Psoas muscle (tissue), 8 donors: ENCODE measurements at regions of chr2 and their contacts with region 1.

Region 1: DNA sequence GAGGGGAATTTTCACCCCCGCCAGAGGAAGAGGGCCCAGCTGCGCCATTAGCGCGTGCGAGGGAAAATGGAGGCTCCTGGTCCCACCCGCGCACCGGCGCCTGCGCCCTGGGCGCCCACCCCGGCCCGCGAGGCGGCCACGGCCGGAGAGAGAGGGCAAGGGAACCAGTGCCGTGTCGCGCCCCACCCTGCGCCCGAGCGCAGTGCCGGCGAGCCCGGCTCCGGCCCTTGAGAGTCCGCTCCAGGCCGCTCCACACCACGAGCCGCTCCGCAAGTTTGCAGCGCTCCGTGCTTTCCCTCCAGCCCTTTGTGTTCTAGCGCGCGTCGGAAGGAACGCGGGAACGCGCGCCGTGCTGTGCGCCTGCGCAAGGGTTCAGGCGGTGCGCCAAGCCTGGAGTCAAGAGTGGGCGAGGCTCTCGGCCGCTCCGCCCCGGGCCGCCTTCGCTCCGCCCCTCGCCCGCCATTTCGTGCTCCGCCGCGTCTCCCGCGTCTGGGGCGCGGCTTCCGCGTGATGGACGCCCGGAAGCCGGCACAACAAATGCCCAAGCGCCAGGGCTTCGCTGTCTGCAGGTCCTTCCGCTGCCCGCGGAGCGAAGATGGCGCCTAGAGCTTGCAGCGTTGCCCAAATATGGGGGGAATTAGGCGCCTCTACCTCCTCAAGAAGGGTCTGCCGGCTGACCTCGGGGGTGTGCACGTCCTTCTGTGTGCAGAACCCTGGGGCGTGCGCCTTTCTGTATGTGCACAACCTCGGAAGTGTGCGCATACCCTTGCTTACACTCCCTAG is 46.1 kb upstream of the PTMA start:
- DNase-seq: peak; percentile 97 to 99
- ATAC-seq: peak; percentile 76 to 79 (median 78)
- H3K4me3 ChIP-seq: peak overlapping the region; percentile 67
- H3K27ac ChIP-seq: peak overlapping the region; percentile 97
- H3K4me1 ChIP-seq: peaks cover 17% of the 10 kb centered on the region
- H3K27me3 ChIP-seq: no peaks in the 10 kb centered on the region
- CTCF ChIP-seq: no peak

Region 2: GRCh38 chr2:231541645-231542044 is 120.6 kb before region 1 on chr2:
- intact Hi-C with region 1: no loop called
- DNase-seq: peak in 1 of 2 donors; percentile 33
- ATAC-seq: peak; percentile 50 to 87 (median 71)
- H3K4me3 ChIP-seq: no peak overlapping the region
- H3K27ac ChIP-seq: peak overlapping the region; percentile 62
- H3K4me1 ChIP-seq: no peaks in the 10 kb centered on the region
- H3K27me3 ChIP-seq: no peaks in the 10 kb centered on the region
- CTCF ChIP-seq: no peak

Region 3: DNA sequence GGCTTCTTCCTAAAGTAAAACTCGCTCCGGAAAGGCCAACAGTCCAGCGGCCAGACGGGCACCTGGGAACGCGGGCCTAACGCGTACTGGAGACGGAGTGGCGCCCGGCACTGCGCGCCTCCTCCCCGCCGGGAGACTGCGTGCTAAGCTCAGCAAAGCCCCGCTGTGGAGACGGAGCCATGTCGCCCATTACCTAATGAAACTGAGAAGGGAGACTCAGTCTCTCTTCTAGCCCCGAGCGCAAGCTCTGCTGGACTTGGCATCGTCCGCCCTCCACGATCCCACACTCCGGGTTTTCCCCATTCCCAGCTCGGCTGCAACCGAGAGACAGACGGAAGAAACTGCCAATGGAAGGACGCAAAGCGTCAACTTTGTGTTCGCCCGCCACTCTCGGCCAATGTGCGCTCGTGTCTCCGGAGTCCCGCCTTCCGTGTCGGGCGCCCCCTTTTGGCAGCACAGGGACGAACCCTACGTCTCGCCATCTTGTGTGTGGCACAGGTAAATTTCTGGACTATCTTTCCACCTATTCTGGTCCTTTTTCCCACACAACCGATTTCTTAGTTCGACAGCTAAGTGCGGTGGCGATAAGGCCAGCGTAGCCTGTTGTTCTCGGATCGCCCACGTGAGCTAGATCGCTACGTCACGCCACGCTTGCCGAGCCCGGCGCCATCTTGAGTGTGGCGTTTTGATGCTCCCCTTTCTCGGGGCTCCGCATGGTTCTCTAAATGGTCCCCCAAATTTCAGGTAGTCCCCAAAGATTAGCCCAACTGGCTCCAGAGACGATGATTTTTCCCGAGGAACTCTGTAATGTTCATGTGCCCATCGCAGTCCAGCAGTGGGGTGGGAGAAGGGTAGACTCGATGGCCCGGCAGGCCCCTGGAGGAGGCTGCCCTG is 44.8 kb after region 1 on chr2:
- intact Hi-C with region 1: loop called (anchors 1 kb)
- DNase-seq: peak; percentile 98 to 99
- ATAC-seq: peak; percentile 64 to 78 (median 67)
- H3K4me3 ChIP-seq: peak overlapping the region; percentile 89
- H3K27ac ChIP-seq: peak overlapping the region; percentile 97
- H3K4me1 ChIP-seq: peaks cover 17% of the 10 kb centered on the region
- H3K27me3 ChIP-seq: no peaks in the 10 kb centered on the region
- CTCF ChIP-seq: peak; percentile 80